Right ventricle myocardium superior (tissue), 1 donor: ENCODE measurements at regions of chr12 and their contacts with region 1.

Region 1: GRCh38 chr12:25436203-25437030 is 116.7 kb downstream of the LMNTD1 start:
- DNase-seq: no peak
- ATAC-seq: peak; percentile 88

Region 2: DNA sequence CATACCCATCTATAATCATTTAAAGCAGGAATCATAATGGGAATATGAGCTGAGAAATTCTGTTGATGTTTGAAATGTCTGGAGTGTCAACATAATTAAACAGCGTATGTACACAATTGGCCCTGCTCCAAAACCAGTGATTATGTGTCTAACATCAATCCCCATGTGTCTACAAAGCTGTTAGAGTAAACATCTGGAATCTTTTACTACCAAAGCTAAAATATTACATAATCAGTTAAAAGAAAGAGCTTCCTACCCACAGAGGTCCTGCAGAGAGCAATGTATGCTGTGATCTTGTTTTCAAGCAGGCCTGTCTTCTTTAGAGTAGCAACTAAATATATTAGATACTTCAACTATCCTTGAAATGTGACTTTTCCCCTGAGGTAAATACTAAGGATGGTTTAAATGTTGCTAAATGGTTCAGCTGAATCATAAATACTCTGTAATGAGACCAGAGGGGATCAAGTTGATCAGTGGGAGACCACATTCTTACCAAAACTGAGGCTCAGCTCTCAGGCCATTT is 596.4 kb after region 1 on chr12:
- intact Hi-C with region 1: loop called (anchors 5 kb)
- DNase-seq: no peak
- ATAC-seq: no peak